ENCODE measurements at regions of chr17 and their contacts with region 1.

Region 1: DNA sequence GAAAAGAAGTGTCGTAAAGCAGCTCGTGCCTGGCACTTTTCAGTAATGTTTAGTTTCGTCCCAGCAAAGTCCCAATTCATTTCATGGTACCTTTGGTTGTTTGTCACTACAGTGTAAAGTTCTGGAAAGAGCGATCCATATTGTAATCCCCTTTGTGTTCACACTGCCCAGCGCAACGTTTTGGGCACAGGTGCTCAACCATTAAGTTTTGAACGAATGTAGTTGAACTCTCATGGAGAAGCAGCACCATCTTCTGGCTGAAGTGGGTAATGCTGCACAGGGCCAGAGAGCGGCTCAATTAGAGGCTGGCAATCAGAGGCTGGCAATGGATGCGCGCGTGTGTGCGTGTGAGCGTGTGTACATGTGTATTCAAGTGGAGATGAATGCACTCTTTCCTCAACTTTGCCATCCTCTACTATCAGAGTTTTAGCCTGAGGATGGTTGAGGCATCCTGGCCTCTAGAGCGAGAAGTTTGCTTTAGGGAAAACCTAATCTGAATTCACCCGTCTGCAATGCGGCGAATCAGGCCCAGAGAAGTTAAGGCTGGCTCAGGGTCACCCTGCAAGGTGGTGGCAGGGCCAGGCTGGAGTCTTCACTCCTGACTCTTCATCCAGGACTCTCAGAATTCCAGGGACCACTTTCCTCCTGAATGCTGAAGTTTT is 29.9 kb downstream of the DYNLL2 start:
- DNase-seq: peak; percentile 89
- H3K4me3 Mint-ChIP-seq: no peak overlapping the region
- H3K27ac Mint-ChIP-seq: no peak overlapping the region
- H3K4me1 Mint-ChIP-seq: peaks cover 4% of the 10 kb centered on the region
- H3K27me3 Mint-ChIP-seq: peaks cover 2% of the 10 kb centered on the region

Region 2: DNA sequence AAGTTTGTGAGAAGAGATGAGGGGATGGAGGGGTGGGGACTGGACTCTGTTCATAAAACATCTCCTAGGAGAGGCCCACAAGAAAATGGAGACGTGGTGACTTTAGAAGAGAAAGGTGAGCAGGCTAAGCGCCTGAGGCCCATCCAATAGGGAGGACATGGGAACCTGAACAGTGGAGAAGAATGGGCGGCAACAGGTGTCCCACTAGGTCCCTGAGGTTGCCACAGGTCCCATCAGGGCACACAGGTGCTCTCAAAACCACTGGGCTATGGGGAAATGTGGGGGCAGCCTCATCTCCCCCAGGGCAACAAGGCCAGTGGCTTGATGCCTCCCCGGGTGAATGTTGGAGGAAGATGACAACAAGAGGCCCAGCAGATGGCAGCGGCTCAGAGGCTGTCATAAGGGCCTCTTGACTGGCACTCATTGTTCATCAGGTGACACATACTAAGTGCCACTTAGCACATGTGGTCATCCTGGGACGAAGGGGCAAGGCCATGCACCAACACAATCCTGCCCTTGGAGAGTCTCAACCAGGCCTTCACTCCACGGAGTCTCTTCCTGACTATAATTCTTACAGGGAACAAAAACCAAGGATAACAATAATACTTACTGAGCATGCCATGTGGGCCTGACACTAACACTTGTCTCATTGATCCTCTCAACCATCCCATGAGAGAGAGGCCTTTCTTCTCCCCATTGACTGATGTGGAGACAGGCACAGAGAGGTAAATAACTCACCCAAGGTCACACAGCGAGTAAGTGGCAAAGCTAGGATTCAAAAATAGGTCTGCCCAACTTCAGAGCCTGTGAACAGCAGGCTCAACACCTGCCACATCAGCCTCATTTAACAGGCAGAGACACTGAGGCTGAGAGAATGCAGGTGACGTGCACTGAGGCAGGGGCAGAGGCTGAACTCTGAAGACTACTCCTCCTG is 195.9 kb before region 1 on chr17:
- CTCF ChIA-PET with region 1: no interaction called
- POLR2A ChIA-PET with region 1: no interaction called
- intact Hi-C with region 1: loop called (anchors 1 kb)
- DNase-seq: peak; percentile 36
- H3K4me3 Mint-ChIP-seq: no peak overlapping the region
- H3K27ac Mint-ChIP-seq: no peak overlapping the region
- H3K4me1 Mint-ChIP-seq: no peaks in the 10 kb centered on the region
- H3K27me3 Mint-ChIP-seq: peaks cover 2% of the 10 kb centered on the region